Naive thymus-derived CD4-positive, alpha-beta T cell (primary cell): ENCODE measurements at regions of chr10 and their contacts with region 1.

Region 1: GRCh38 chr10:21953585-21954057 is 49.9 kb downstream of the DNAJC1 start:
- DNase-seq: peak in 6 of 9 donors; percentile 10 to 48 (median 26)
- ATAC-seq: peak; percentile 68
- H3K4me3 ChIP-seq: no peak overlapping the region
- H3K4me3 Mint-ChIP-seq: no peak overlapping the region
- H3K27ac ChIP-seq: no peak overlapping the region
- H3K27ac Mint-ChIP-seq: no peak overlapping the region
- H3K4me1 ChIP-seq: no peaks in the 10 kb centered on the region
- H3K4me1 Mint-ChIP-seq: peaks cover 0 to 4% (median 0%) of the 10 kb centered on the region in 7 donors
- H3K27me3 ChIP-seq: no peaks in the 10 kb centered on the region
- H3K27me3 Mint-ChIP-seq: no peaks in the 10 kb centered on the region

Region 2: DNA sequence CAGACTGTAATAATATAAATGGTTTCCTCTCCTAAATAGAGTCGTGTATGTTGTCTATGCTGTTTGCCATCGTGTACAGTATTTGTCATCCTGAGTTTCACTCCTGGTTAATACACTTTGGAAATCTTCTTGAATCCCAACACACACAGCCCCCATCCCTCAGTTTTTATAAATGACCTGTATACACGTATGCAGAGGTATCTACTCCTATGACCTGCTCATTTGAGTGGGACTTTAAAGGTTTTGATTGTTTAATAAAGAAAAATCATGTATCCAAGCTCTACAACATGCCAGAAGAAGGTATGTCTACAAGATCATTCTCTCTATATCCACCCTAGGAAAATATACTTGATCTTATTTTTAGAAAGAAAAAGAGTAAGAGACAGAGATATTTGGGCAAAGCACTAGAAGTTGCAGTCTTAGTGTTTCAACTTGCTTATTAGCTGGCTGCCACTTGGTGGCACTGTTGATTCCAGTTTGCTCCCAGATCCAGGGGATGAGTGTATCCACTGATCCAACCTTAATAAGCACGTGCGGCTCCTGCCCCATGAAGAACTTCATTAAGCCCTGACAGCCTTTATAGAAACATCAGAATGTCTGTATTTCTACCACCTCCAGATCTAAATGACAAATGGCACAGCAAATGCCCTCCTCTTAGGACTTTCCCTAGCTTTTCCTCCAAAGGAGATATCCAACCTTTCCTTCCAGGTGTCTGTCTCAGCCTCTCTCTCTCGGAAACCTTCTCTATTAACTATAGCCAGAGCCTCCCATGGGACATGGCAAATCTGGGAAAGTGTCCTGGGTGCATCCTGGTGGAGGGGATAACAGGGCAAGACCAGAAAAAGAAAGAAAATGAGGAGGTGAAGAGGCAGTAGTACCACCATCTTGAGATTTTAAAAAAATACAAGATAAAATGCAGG is 875.0 kb before region 1 on chr10:
- CTCF ChIA-PET with region 1: no interaction called
- POLR2A ChIA-PET with region 1: no interaction called
- intact Hi-C with region 1: loop called in 1 of 2 experiments (anchors 5 kb)
- DNase-seq: no peak
- ATAC-seq: no peak
- H3K4me3 ChIP-seq: no peak overlapping the region
- H3K4me3 Mint-ChIP-seq: no peak overlapping the region
- H3K27ac ChIP-seq: no peak overlapping the region
- H3K27ac Mint-ChIP-seq: peak overlapping the region in 1 of 9 donors; percentile 87
- H3K4me1 ChIP-seq: no peaks in the 10 kb centered on the region
- H3K4me1 Mint-ChIP-seq: no peaks in the 10 kb centered on the region
- H3K27me3 ChIP-seq: no peaks in the 10 kb centered on the region
- H3K27me3 Mint-ChIP-seq: peaks cover 0 to 10% (median 3%) of the 10 kb centered on the region in 5 donors

Region 3: DNA sequence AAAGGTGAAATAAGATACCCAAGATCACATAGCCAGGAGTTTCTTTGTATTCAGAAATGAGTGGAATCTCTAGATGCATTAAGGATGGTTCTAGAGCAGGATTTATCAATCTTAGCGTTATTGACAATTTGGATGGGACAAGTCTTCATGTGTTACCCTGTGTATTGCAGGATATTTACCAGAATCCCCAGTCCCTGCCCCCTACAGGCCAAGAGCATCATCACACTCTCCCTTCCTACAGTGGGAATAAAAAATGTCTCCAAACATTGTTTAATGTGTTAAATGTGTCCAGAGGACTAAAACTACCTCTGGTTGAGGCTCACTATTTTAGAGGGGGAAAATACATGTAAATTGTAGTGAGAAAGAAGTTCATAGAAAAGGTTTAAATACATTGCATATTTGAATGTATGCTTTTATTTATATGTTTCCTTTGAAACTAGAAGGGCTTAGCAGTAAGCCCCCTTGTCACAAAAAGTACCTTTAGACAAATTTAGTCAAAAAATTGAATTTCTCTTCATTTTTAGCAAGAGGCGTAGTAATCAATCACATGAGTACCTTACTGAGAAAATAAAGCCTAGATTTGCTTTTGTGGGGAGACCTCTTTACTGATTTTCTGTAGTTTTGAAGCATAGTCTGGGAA is 278.3 kb before region 1 on chr10:
- CTCF ChIA-PET with region 1: no interaction called
- POLR2A ChIA-PET with region 1: no interaction called
- intact Hi-C with region 1: loop called in 1 of 2 experiments (anchors 5 kb)
- DNase-seq: peak in 5 of 9 donors; percentile 8 to 35 (median 14)
- ATAC-seq: peak; percentile 73
- H3K4me3 ChIP-seq: no peak overlapping the region
- H3K4me3 Mint-ChIP-seq: no peak overlapping the region
- H3K27ac ChIP-seq: no peak overlapping the region
- H3K27ac Mint-ChIP-seq: no peak overlapping the region
- H3K4me1 ChIP-seq: no peaks in the 10 kb centered on the region
- H3K4me1 Mint-ChIP-seq: peaks cover 4 to 31% (median 20%) of the 10 kb centered on the region in 7 donors
- H3K27me3 ChIP-seq: no peaks in the 10 kb centered on the region
- H3K27me3 Mint-ChIP-seq: no peaks in the 10 kb centered on the region

Region 4: GRCh38 chr10:21732067-21732772 is 221.4 kb before region 1 on chr10:
- CTCF ChIA-PET with region 1: interaction called, 3 read pairs
- POLR2A ChIA-PET with region 1: no interaction called
- intact Hi-C with region 1: loop called (anchors 5 to 10 kb)
- DNase-seq: peak in 6 of 9 donors; percentile 27 to 48 (median 34)
- ATAC-seq: peak; percentile 76
- H3K4me3 ChIP-seq: no peak overlapping the region
- H3K4me3 Mint-ChIP-seq: no peak overlapping the region
- H3K27ac ChIP-seq: no peak overlapping the region
- H3K27ac Mint-ChIP-seq: peak overlapping the region in 4 of 9 donors; percentile 3 to 77 (median 60)
- H3K4me1 ChIP-seq: peaks cover 0 to 19% of the 10 kb centered on the region in 2 donors
- H3K4me1 Mint-ChIP-seq: peaks cover 19 to 42% (median 35%) of the 10 kb centered on the region in 7 donors
- H3K27me3 ChIP-seq: no peaks in the 10 kb centered on the region
- H3K27me3 Mint-ChIP-seq: no peaks in the 10 kb centered on the region